Heart right ventricle (tissue), 16 donors: ENCODE measurements at regions of chr21 and their contacts with region 1.

Region 1: DNA sequence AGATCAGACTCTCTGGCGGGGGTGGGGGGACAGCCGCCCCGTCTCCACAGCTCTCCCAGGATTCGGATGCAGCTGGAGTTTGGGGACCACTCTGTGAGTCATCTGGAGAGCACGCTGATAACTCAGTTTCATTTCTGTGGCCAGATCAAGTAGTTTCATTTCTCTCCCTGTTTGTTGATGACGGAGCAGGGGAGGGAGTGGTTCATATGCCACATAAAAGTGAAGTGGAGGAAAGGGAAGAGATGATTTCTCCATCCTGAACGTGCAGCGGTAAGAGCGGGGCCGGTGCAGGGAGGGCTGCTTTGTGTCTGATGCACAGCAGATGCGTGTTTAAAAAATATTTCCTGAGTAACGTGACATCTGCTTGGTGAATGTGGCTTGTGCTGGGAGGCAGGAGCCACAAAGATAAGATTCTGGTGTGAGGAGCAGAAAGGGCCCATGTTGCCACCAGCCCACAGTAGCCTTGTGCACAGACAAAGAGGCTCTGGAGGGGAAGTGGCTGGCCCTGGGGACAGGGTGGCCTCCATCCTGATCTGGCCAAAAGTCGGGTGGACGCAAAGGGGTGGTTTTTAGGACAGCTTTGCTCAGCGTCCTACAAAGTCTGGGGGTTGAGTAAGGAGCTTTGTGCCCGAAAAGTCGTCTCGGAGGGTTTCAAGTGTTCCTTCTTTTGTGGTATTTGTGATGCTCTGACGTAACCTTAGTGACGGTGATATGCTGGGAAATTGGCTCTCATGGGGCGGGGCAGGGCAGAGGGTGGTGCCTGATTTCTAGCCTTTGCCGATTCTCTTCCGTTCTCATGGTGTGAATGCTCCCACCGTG is at the start of gene MX2:
- DNase-seq: peak; percentile 69 to 85
- ATAC-seq: peak; percentile 80 to 95 (median 89)
- H3K4me3 ChIP-seq: peak within 1 kb of the TSS; percentile 13 to 65 (median 59)
- H3K27ac ChIP-seq: peak within 1 kb of the TSS; percentile 88 to 96 (median 94)
- H3K4me1 ChIP-seq: peaks cover 0 to 50% (median 18%) of the 10 kb centered on the region in 9 donors
- H3K27me3 ChIP-seq: peaks cover 0 to 5% (median 0%) of the 10 kb centered on the region in 7 donors
- CTCF ChIP-seq: no peak
- total RNA-seq, gene MX2: 3.9 to 22.9 (median 7.3) TPM

Region 2: DNA sequence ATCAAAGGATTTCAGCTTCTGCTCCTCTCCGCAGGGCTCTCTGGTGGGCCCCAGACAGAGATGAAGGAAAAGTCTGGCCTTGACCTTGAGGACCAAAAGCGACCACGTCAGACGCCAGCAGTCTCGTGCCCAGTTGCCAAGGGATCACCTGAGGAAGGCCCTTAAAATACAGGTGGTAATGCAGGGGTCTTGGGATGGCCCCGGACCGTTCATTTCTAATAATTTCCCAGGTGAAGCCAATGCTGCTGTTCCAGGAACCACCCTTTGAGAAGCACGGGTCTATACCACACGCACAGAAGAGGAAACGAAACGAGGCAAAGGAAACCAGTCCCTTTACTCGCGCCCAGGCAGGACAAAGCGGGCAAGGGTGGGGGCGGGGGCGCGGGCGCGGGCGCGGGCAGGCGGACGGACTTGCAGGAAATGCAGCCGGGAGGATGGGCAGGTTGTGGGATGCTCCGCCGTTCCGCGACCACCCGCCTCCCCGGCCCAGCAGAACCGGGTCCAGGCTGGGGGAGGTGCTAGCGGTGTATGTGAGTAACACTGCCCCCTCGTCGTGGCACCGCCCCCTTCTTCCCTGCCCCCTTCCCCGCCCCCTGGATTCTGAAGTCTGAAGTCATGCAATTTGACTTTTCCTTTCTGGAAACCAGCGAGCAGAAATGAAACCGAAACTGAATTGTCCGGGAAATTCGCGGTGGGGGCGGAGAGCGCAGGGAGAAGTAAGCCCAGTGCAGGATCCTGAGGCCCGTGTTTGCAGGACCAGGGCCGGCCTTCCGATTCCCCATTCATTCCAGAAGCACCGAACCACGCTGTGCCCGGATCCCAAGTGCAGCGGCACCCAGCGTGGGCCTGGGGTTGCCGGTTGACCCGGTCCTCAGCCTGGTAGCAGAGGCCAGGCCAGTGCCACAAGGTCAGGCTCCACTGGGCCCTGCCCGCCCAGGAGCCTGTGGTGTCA is 58.2 kb after region 1 on chr21:
- intact Hi-C with region 1: loop called in 4 of 10 experiments (anchors 5 to 10 kb)
- DNase-seq: peak; percentile 80 to 93
- ATAC-seq: peak; percentile 91 to 97 (median 96)
- H3K4me3 ChIP-seq: peak overlapping the region; percentile 53 to 77 (median 68)
- H3K27ac ChIP-seq: peak overlapping the region; percentile 75 to 99 (median 91)
- H3K4me1 ChIP-seq: peaks cover 0 to 31% (median 16%) of the 10 kb centered on the region in 9 donors
- H3K27me3 ChIP-seq: no peaks in the 10 kb centered on the region
- CTCF ChIP-seq: no peak